ENCODE measurements at regions of chr9 and their contacts with region 1.

Region 1: GRCh38 chr9:68704814-68705530 is at the start of gene PIP5K1B:
- DNase-seq: peak; percentile 92
- ATAC-seq: peak; percentile 92
- total RNA-seq, gene PIP5K1B: 60.6 TPM

Region 2: GRCh38 chr9:68595868-68596267 is 109.1 kb before region 1 on chr9:
- intact Hi-C with region 1: loop called (anchors 5 kb)
- DNase-seq: no peak
- ATAC-seq: no peak

Region 3: GRCh38 chr9:68779558-68780384 is 74.8 kb after region 1 on chr9:
- intact Hi-C with region 1: loop called (anchors 2 kb)
- DNase-seq: peak; percentile 98
- ATAC-seq: peak; percentile 95

Region 4: GRCh38 chr9:68832853-68833518 is 128.0 kb after region 1 on chr9:
- intact Hi-C with region 1: no loop called
- DNase-seq: no peak
- ATAC-seq: no peak

Region 5: DNA sequence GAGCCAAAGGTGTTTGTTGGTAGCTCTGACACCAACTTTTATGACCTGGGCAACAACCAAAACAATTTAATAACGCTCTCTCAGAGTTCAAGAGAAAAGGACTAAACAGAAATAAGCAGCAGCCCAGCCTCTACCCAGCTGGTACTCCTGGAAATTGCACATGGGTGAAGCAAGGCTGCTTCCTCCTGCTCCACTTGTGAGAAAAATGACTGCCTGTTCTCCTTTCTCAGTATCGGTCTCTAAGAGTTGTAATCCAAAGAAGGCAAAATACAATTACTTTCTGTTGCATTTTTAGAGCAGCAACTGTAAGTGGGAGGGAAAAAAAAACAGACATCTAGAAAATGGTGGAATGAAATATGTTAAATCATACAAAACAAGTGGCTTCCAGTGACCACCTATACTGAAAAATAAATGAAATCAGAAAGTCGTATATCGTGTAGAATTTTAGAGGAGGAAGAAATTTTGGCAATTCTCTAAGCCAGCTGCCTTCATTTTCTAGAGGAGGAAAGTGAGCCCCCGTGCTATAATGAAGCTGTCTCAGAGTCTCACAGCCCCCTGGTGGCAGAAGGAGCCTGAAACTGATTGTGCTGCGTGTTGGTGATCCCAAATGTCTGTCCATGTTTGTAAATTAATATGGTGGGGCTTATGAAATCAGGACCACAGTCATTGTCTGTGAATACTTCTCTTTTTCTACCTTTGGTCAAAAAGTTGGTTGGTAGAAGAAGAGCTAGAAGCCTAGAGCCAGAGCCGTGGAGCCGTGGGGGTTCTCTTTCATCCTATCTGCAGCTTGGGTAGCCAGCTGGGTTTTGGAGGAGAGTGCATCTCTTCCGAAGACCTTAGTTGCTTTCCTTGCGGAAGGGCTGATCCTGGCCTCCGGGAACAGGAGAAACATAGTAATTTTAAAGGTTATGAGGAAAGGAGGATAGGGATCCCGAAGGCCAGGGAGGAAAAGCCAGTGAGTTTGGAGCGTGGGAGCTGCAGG is 139.9 kb after region 1 on chr9:
- intact Hi-C with region 1: loop called (anchors 5 kb)
- DNase-seq: no peak
- ATAC-seq: no peak

Region 6: GRCh38 chr9:68949271-68950000 is 244.5 kb after region 1 on chr9:
- intact Hi-C with region 1: loop called (anchors 10 kb)
- DNase-seq: no peak
- ATAC-seq: peak; percentile 44

Region 7: DNA sequence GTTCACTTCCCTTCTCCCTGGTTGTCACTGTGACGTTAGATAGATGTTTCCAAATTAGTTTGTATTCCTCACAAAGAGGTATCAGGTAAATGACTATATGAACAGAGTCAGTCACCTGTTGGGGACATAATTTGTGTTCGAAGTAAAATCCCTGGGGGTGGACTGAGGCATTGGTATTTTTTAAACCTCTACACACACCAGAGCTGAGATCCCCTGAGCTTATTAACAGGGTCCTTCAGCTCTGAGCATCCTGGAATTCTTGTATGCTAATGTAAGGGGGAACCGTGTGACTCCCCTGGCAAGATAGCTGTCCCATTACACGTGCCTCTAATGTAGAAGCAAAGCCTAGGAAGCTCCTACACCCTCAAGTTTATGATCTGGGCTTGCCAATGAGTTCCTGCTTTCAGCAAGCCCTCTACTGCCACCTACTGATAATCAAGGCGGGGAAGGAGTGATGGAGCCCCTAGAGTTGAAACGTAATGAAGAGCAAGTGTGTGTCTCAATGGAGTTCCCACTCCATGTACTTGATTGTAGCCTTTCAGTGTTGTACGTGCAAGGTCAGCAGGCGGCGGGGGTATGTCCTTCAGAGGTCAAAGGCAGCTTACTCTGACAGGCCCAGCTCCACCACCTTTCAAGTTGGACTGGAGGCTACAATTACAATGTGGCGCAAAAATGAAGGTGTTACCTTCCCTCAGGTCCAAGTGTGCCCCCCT is 294.6 kb after region 1 on chr9:
- intact Hi-C with region 1: loop called (anchors 1 kb)
- DNase-seq: no peak
- ATAC-seq: peak; percentile 87